ENCODE measurements at regions of chr4 and their contacts with region 1.

Region 1: DNA sequence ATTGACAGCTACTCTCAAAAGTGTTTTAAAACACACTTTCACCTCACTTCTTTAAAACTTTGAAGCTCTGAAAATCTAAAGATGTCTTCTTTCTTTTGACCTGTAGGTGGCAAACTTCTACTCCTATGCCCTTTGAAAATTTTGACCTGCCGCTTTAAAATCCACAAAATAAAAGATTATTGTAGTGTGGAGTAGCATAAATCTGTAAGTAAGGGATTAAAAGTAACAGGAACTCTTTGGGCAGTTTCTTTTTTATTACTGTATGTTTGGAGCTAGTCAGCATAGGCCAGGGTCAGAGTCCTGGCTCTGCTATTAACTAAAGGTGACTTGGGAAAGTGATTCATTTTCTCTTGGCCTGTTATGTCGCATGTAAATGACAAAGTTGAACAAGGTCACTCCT is 25.5 kb downstream of the BBS12 start:
- DNase-seq: no peak
- H3K4me3 ChIP-seq: no peak overlapping the region
- CTCF ChIP-seq: peak; percentile 20

Region 2: GRCh38 chr4:122744229-122744628 is 13.8 kb before region 1 on chr4:
- CTCF ChIA-PET with region 1: interaction called, 55 read pairs
- POLR2A ChIA-PET with region 1: no interaction called
- DNase-seq: peak; percentile 69
- H3K4me3 ChIP-seq: no peak overlapping the region
- CTCF ChIP-seq: no peak

Region 3: DNA sequence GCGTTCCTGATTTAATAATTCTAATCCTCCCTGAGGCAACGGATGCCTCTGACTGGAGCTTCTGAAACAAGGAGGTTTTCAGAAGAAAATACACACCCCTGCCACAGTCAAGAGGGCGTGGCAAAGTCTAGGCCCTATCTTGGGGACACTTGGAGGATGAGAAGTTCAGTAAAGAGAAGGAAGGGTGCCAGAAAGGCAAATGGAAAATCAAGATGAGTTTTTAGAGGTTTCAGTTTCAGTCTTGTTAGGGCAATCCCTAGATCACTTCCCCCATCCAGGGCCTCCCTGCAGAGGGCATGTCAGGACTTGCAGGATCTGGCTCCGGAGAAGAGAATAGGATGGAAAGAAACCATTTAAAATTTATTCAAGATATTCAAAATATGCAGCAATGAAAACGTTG is 40.1 kb after region 1 on chr4:
- CTCF ChIA-PET with region 1: interaction called, 10 read pairs
- POLR2A ChIA-PET with region 1: no interaction called
- DNase-seq: peak; percentile 95
- H3K4me3 ChIP-seq: peak overlapping the region; percentile 26
- CTCF ChIP-seq: no peak

Region 4: GRCh38 chr4:122903766-122904288 is 145.8 kb after region 1 on chr4:
- CTCF ChIA-PET with region 1: interaction called, 21 read pairs
- POLR2A ChIA-PET with region 1: no interaction called
- DNase-seq: no peak
- H3K4me3 ChIP-seq: no peak overlapping the region
- CTCF ChIP-seq: no peak

Region 5: GRCh38 chr4:122930862-122931261 is 172.8 kb after region 1 on chr4:
- CTCF ChIA-PET with region 1: interaction called, 41 read pairs
- POLR2A ChIA-PET with region 1: no interaction called
- DNase-seq: no peak
- H3K4me3 ChIP-seq: no peak overlapping the region
- CTCF ChIP-seq: no peak

Region 6: DNA sequence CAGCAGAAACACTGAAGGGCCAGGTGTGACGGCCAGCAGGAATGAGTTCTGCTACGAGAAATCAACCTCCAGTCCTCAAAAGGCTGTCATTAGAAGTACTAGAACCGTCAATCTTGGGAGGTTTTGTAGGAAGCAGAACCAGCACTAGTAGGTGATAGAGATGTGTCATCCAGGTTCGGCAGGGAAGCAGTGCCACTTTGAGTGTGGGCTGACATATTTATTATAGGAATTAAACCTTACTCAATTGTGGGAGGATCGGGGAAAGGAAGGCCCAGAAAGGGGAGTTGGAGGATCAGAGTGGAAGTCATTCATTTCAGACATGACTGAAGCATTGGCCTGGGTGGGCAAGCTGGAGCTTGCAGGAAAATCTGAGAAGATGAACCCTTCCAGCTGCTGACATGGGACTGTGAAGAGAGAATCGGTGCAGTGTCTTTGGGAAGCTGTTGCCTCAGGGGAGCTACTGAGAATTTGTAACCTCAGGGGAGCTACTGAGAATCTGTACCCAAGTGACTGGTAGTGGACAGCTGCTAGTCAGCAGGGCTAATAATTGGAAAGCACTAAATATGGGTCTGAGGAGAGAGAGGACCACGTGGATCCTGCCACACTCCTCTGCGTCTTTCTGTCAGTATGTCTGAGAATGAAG is 816.0 kb after region 1 on chr4:
- CTCF ChIA-PET with region 1: no interaction called
- POLR2A ChIA-PET with region 1: no interaction called
- DNase-seq: no peak
- H3K4me3 ChIP-seq: no peak overlapping the region
- CTCF ChIP-seq: no peak

Measured in AG04449 (cell line).